ENCODE measurements at regions of chr17 and their contacts with region 1.

Region 1: GRCh38 chr17:21592774-21593173 is 99.5 kb upstream of the KCNJ18 start:
- DNase-seq: no peak
- ATAC-seq: no peak
- H3K4me3 ChIP-seq: no peak overlapping the region
- H3K27ac ChIP-seq: no peak overlapping the region
- H3K4me1 ChIP-seq: no peaks in the 10 kb centered on the region
- H3K27me3 ChIP-seq: no peaks in the 10 kb centered on the region
- CTCF ChIP-seq: no peak
- EP300 ChIP-seq: no peak
- POLR2A ChIP-seq: no peak
- RAD21 ChIP-seq: no peak

Region 2: DNA sequence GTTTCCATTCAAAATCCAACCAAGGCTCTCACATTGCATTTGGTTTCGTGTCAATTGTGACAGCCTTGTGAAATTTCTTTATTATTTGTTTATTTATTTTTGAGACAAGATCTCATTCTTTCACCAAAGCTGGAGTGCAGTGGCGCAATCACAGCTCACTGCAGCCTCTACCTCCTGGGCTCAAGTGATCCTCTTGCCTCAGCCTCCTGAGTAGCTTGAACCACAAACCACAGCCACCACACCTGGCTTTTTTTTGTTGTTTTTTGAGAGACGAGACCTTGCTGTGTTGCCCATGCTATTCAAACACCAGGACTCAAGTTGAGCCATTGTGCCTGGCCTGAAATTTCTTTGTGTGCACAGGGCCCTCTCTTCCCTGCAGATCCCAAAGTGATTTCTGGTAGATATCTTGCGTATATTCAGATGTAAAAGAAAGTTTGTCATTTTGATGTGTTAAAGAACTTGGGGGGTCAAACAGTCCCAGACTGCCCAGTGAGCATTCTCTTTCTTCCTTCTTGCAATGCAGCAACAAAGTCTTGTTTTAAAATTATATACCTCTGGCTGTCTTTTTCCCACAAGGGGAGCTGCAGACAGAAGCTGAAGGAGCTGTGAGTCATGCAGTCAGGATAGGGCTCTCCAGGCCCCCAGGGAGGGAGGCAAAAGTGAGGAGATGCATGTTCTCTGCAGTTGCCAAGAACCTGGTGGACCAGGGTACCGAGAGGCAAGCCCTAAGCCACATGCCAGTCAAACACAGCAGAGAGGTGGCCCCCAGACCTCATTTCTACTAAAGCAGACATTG is 534.5 kb before region 1 on chr17:
- CTCF ChIA-PET with region 1: no interaction called
- POLR2A ChIA-PET with region 1: no interaction called
- RAD21 ChIA-PET with region 1: no interaction called
- SMC1A ChIA-PET with region 1: no interaction called
- in situ Hi-C with region 1: no loop called
- intact Hi-C with region 1: no loop called
- DNase-seq: no peak
- ATAC-seq: no peak
- H3K4me3 ChIP-seq: no peak overlapping the region
- H3K27ac ChIP-seq: no peak overlapping the region
- H3K4me1 ChIP-seq: peaks cover 33% of the 10 kb centered on the region
- H3K27me3 ChIP-seq: no peaks in the 10 kb centered on the region
- CTCF ChIP-seq: no peak
- EP300 ChIP-seq: no peak
- POLR2A ChIP-seq: no peak
- RAD21 ChIP-seq: no peak

Region 3: DNA sequence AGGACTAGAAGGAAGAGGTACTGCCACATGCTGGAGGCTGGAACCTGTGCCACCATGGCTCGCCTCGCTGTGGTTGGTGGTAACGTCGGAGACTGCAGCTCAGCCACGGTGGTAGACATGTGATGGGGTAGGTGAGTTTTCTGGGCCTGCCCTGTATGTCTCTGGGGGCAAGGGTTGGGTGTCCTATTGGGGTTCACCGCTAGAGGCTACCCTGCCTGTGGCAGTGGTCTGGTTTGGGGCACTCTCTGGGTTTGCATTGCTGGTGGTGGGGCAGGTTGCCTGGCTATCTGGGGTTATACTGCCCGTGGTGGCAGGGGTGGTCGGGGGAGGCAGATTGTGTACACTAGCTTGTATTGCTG is 20.3 kb after region 1 on chr17:
- CTCF ChIA-PET with region 1: no interaction called
- POLR2A ChIA-PET with region 1: no interaction called
- RAD21 ChIA-PET with region 1: no interaction called
- SMC1A ChIA-PET with region 1: no interaction called
- in situ Hi-C with region 1: no loop called
- intact Hi-C with region 1: no loop called
- DNase-seq: no peak
- ATAC-seq: no peak
- H3K4me3 ChIP-seq: no peak overlapping the region
- H3K27ac ChIP-seq: no peak overlapping the region
- H3K4me1 ChIP-seq: no peaks in the 10 kb centered on the region
- H3K27me3 ChIP-seq: no peaks in the 10 kb centered on the region
- CTCF ChIP-seq: no peak
- EP300 ChIP-seq: no peak
- POLR2A ChIP-seq: no peak
- RAD21 ChIP-seq: no peak

Region 4: GRCh38 chr17:21689604-21690003 is 96.8 kb after region 1 on chr17:
- CTCF ChIA-PET with region 1: no interaction called
- POLR2A ChIA-PET with region 1: no interaction called
- RAD21 ChIA-PET with region 1: no interaction called
- SMC1A ChIA-PET with region 1: no interaction called
- in situ Hi-C with region 1: loop called (anchors 25 kb)
- intact Hi-C with region 1: no loop called
- DNase-seq: no peak
- ATAC-seq: no peak
- H3K4me3 ChIP-seq: no peak overlapping the region
- H3K27ac ChIP-seq: no peak overlapping the region
- H3K4me1 ChIP-seq: no peaks in the 10 kb centered on the region
- H3K27me3 ChIP-seq: no peaks in the 10 kb centered on the region
- CTCF ChIP-seq: no peak
- EP300 ChIP-seq: no peak
- POLR2A ChIP-seq: no peak
- RAD21 ChIP-seq: no peak

Region 5: GRCh38 chr17:21772321-21772720 is 179.5 kb after region 1 on chr17:
- CTCF ChIA-PET with region 1: no interaction called
- POLR2A ChIA-PET with region 1: no interaction called
- RAD21 ChIA-PET with region 1: no interaction called
- SMC1A ChIA-PET with region 1: no interaction called
- in situ Hi-C with region 1: loop called (anchors 25 kb)
- intact Hi-C with region 1: no loop called
- DNase-seq: no peak
- ATAC-seq: no peak
- H3K4me3 ChIP-seq: no peak overlapping the region
- H3K27ac ChIP-seq: no peak overlapping the region
- H3K4me1 ChIP-seq: no peaks in the 10 kb centered on the region
- H3K27me3 ChIP-seq: no peaks in the 10 kb centered on the region
- CTCF ChIP-seq: no peak
- EP300 ChIP-seq: no peak
- POLR2A ChIP-seq: no peak
- RAD21 ChIP-seq: no peak